K562 (cell line): ENCODE measurements at regions of chr18 and their contacts with region 1.

Region 1: GRCh38 chr18:62651276-62652056 is 63.9 kb upstream of the PHLPP1 start:
- DNase-seq: no peak
- ATAC-seq: no peak
- H3K4me3 ChIP-seq: no peak overlapping the region
- H3K27ac ChIP-seq: no peak overlapping the region
- H3K4me1 ChIP-seq: no peaks in the 10 kb centered on the region; a peak in 2 of 5 replicates
- H3K27me3 ChIP-seq: no peaks in the 10 kb centered on the region
- CTCF ChIP-seq: no peak
- EP300 ChIP-seq: no peak
- POLR2A ChIP-seq: no peak
- RAD21 ChIP-seq: no peak

Region 2: DNA sequence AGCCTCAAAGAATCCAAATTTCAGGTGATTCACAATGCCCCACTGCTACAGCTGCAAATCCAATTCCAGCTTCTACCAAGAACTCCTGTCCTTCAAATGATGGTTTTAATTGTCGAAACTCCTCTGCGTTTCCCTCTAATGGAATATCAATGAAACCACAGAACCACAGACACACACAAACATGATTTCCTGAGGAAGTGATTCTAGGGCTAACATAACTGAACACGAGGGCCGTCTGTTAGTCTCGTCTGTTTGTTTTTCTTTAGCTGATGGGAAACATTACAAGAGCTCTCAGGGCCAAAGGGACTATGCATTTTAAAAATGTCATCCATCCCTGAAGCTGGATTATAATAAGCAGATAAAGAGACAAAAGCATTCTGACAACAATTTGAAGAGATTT is 818.1 kb before region 1 on chr18:
- CTCF ChIA-PET with region 1: no interaction called
- POLR2A ChIA-PET with region 1: no interaction called
- in situ Hi-C with region 1: no loop called
- intact Hi-C with region 1: no loop called
- DNase-seq: no peak
- ATAC-seq: no peak
- H3K4me3 ChIP-seq: no peak overlapping the region
- H3K27ac ChIP-seq: no peak overlapping the region
- H3K4me1 ChIP-seq: no peaks in the 10 kb centered on the region
- H3K27me3 ChIP-seq: no peaks in the 10 kb centered on the region
- CTCF ChIP-seq: no peak
- EP300 ChIP-seq: no peak
- POLR2A ChIP-seq: no peak
- RAD21 ChIP-seq: no peak

Region 3: DNA sequence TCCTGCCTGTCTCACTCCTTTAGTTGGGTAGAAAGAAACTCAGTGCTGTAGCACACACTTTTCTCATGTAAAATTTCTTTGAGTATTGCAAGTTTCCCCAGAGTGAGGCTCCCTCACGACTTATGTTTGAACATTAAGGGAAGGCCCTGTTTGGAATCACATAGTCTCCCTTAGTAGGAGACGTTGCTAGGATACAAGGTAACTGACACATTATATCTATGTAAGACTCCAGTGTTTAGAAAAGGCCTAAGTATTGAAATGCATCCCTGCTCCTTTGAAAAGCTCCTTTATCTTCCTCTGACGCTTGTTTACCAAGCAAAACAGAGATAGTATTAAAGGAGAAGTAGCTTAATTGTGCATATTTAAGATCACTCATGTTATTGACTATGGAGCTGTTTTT is 312.0 kb after region 1 on chr18:
- CTCF ChIA-PET with region 1: no interaction called
- POLR2A ChIA-PET with region 1: no interaction called
- in situ Hi-C with region 1: loop called (anchors 10 kb)
- intact Hi-C with region 1: no loop called
- DNase-seq: no peak
- ATAC-seq: no peak
- H3K4me3 ChIP-seq: no peak overlapping the region
- H3K27ac ChIP-seq: no peak overlapping the region
- H3K4me1 ChIP-seq: no peaks in the 10 kb centered on the region
- H3K27me3 ChIP-seq: no peaks in the 10 kb centered on the region
- CTCF ChIP-seq: no peak
- EP300 ChIP-seq: no peak
- POLR2A ChIP-seq: no peak
- RAD21 ChIP-seq: no peak